Activated CD4-positive, alpha-beta memory T cell treated with anti-CD3 and anti-CD28 coated beads for 36 hours (primary cell): ENCODE measurements at regions of chr1 and their contacts with region 1.

Region 1: GRCh38 chr1:42681741-42682483 is at the start of gene YBX1:
- DNase-seq: peak; percentile 97
- H3K4me3 Mint-ChIP-seq: peak within 1 kb of the TSS; percentile 93
- H3K27ac Mint-ChIP-seq: peak within 1 kb of the TSS; percentile 97
- H3K4me1 Mint-ChIP-seq: peaks cover 45% of the 10 kb centered on the region
- H3K27me3 Mint-ChIP-seq: no peaks in the 10 kb centered on the region
- total RNA-seq, gene YBX1: 1,101 to 1,134 TPM

Region 2: DNA sequence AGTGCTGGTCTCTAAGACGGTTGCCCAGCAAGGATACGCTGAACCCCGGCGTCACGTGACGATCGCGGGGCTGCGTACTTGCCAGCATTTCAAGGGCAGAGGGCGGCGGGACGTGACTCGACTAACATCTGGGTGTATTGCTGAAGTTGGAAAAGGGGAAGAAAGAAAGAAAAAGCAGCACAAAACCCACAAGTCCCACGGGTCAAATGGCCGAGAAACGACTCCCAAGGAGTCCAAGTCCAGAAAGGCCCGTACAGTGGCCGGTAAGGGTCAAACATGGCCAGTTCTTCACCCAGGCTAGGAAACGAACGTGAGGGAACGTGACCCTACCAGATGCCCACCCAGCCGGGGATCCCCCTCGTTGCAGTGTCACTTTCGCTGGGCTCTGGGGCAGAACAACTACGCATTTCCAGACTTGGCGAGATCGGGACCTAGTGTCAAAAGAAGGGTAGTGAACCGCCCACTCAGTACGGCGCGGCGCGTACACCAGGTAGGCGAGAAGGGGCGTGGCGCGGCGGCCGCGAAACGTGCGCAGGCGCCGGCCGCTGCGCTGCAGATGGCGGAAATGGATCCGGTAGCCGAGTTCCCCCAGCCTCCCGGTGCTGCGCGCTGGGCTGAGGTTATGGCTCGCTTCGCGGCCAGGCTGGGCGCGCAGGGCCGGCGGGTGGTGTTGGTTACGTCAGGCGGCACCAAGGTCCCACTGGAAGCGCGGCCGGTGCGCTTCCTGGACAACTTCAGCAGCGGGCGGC is 225.7 kb before region 1 on chr1 and contains the starts of genes PPCS and ZMYND12:
- CTCF ChIA-PET with region 1: no interaction called
- POLR2A ChIA-PET with region 1: no interaction called
- intact Hi-C with region 1: loop called (anchors 1 kb)
- DNase-seq: peak; percentile 95
- H3K4me3 Mint-ChIP-seq: peak within 1 kb of the TSS; percentile 79
- H3K27ac Mint-ChIP-seq: peak within 1 kb of the TSS; percentile 91
- H3K4me1 Mint-ChIP-seq: peaks cover 23% of the 10 kb centered on the region
- H3K27me3 Mint-ChIP-seq: no peaks in the 10 kb centered on the region
- total RNA-seq, gene PPCS: 50.8 to 52.3 TPM
- total RNA-seq, gene ZMYND12: 0.97 to 1.3 TPM

Region 3: GRCh38 chr1:42469727-42470126 is 212.2 kb before region 1 on chr1:
- CTCF ChIA-PET with region 1: no interaction called
- POLR2A ChIA-PET with region 1: no interaction called
- intact Hi-C with region 1: no loop called
- DNase-seq: no peak
- H3K4me3 Mint-ChIP-seq: no peak overlapping the region
- H3K27ac Mint-ChIP-seq: no peak overlapping the region
- H3K4me1 Mint-ChIP-seq: no peaks in the 10 kb centered on the region
- H3K27me3 Mint-ChIP-seq: no peaks in the 10 kb centered on the region